ENCODE measurements at regions of chr4 and their contacts with region 1.

Region 1: GRCh38 chr4:157128395-157128794 is 52.4 kb downstream of the GLRB start:
- DNase-seq: peak in 1 of 2 experiments; percentile 10
- H3K4me3 ChIP-seq: no peak overlapping the region
- H3K4me3 Mint-ChIP-seq: no peak overlapping the region
- H3K27ac Mint-ChIP-seq: no peak overlapping the region
- H3K4me1 ChIP-seq: no peaks in the 10 kb centered on the region
- H3K4me1 Mint-ChIP-seq: no peaks in the 10 kb centered on the region
- H3K27me3 ChIP-seq: no peaks in the 10 kb centered on the region
- H3K27me3 Mint-ChIP-seq: no peaks in the 10 kb centered on the region
- CTCF ChIP-seq: peak in 1 of 2 experiments; percentile 15

Region 2: GRCh38 chr4:156475322-156475721 is 653.1 kb before region 1 on chr4:
- CTCF ChIA-PET with region 1: no interaction called
- POLR2A ChIA-PET with region 1: no interaction called
- intact Hi-C with region 1: loop called (anchors 1 kb)
- DNase-seq: peak in 1 of 2 experiments; percentile 5
- H3K4me3 ChIP-seq: no peak overlapping the region
- H3K4me3 Mint-ChIP-seq: no peak overlapping the region
- H3K27ac Mint-ChIP-seq: no peak overlapping the region
- H3K4me1 ChIP-seq: no peaks in the 10 kb centered on the region
- H3K4me1 Mint-ChIP-seq: no peaks in the 10 kb centered on the region
- H3K27me3 ChIP-seq: no peaks in the 10 kb centered on the region
- H3K27me3 Mint-ChIP-seq: no peaks in the 10 kb centered on the region
- CTCF ChIP-seq: peak; percentile 29 to 46

Region 3: GRCh38 chr4:156723951-156724668 is 404.3 kb before region 1 on chr4:
- CTCF ChIA-PET with region 1: no interaction called
- POLR2A ChIA-PET with region 1: no interaction called
- intact Hi-C with region 1: no loop called
- DNase-seq: no peak
- H3K4me3 ChIP-seq: no peak overlapping the region
- H3K4me3 Mint-ChIP-seq: no peak overlapping the region
- H3K27ac Mint-ChIP-seq: no peak overlapping the region
- H3K4me1 ChIP-seq: no peaks in the 10 kb centered on the region
- H3K4me1 Mint-ChIP-seq: no peaks in the 10 kb centered on the region
- H3K27me3 ChIP-seq: no peaks in the 10 kb centered on the region
- H3K27me3 Mint-ChIP-seq: peaks cover 2% of the 10 kb centered on the region
- CTCF ChIP-seq: no peak

Region 4: GRCh38 chr4:157713342-157713741 is 584.9 kb after region 1 on chr4:
- CTCF ChIA-PET with region 1: no interaction called
- POLR2A ChIA-PET with region 1: no interaction called
- intact Hi-C with region 1: no loop called
- DNase-seq: no peak
- H3K4me3 ChIP-seq: no peak overlapping the region
- H3K4me3 Mint-ChIP-seq: no peak overlapping the region
- H3K27ac Mint-ChIP-seq: no peak overlapping the region
- H3K4me1 ChIP-seq: no peaks in the 10 kb centered on the region
- H3K4me1 Mint-ChIP-seq: no peaks in the 10 kb centered on the region
- H3K27me3 ChIP-seq: no peaks in the 10 kb centered on the region
- H3K27me3 Mint-ChIP-seq: no peaks in the 10 kb centered on the region
- CTCF ChIP-seq: no peak